Pancreas (tissue), 10 donors: ENCODE measurements at regions of chr4 and their contacts with region 1.

Region 1: DNA sequence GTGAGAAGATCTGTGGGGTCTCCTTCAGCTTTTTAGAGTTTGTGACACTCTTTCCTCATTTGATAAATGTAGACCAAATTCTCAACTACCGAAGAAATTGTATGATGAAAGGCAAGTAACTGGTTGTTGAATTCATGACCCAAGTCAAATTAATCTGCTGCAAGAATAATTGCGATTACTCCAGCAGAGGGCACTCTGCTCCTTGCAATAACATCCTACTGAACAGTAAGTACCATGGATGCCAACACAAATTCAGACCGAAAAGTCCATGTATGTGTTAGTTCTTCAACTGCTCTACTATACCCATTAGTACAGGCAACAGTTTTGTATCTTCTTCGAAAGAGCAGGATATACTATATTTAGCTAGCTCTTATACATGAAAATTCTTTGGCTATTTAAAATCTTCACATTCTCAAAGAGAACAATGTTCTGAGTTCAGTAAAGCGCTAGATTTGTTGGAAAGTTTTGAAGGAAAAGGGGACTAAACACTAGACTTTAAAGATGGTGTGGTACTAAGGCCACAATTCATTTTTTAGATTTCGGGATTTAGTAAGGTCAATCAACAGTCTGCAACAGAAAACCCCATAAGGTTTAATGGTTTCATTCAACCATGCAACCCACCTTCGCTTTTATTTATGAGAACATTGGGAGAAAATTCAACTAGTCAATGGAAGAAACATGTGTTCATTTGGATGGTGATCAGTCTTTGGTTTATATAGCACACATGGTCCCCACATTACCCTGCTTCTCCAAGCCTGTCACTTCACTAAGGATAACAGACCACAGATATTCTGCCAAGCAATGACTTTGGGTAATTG is 105.4 kb upstream of the TBC1D9 start:
- DNase-seq: peak in 4 of 6 donors; percentile 19 to 72 (median 46)
- ATAC-seq: peak; percentile 81 to 95 (median 92)
- H3K4me3 ChIP-seq: no peak overlapping the region
- H3K27ac ChIP-seq: no peak overlapping the region
- H3K4me1 ChIP-seq: no peaks in the 10 kb centered on the region
- H3K27me3 ChIP-seq: no peaks in the 10 kb centered on the region
- CTCF ChIP-seq: peak; percentile 22 to 60 (median 56)

Region 2: GRCh38 chr4:140800666-140801065 is 60.9 kb before region 1 on chr4:
- intact Hi-C with region 1: no loop called
- DNase-seq: no peak
- ATAC-seq: peak in 2 of 4 donors; percentile 20 to 44
- H3K4me3 ChIP-seq: no peak overlapping the region
- H3K27ac ChIP-seq: no peak overlapping the region
- H3K4me1 ChIP-seq: no peaks in the 10 kb centered on the region
- H3K27me3 ChIP-seq: no peaks in the 10 kb centered on the region
- CTCF ChIP-seq: no peak

Region 3: DNA sequence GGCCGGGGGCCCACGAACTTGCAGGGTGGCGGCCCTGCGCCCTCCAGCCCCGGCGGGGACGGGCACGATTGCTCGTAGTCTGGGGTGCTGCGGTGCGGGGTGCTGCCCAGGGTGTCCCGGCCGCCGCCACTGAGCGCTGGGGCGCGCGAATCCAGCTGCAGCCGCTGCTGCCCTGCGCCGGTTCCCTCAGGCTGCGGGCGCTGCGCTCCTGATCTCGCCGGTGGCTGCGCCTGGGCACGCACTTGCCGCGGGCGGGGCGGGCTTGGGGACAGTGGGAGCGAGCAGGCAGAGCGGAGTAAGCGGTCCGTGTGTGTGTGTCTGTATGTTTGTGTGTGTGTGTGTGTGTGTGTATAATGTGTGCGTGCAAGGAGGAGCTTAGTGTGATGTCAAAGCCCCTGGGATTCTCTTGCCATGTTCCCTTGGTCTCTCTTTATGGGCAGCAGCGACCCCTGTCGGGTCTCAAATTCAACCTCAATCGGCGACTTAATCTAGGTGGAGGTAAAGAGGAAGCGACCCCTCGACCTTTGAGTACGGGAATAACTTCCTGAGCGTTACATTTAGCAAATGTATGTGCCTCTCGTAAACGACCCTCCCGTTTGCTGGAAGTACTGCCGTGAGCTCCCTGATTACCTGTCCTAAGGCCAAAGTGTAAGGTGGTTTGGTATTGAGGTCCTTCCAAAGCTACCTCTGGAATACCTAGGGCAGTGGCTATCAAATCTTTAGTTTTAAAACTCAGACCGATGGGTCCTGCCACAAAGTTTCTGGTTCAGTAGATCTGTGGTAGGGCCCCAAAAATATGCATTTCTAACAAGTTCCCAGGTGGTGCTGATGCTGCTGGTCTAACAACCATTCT is 271.8 kb after region 1 on chr4 and contains the start of gene RNF150:
- intact Hi-C with region 1: loop called in 2 of 3 experiments (anchors 5 kb)
- DNase-seq: peak; percentile 54 to 84 (median 72)
- ATAC-seq: peak; percentile 84 to 93 (median 90)
- H3K4me3 ChIP-seq: peak within 1 kb of the TSS; percentile 74 to 94 (median 77)
- H3K27ac ChIP-seq: peak within 1 kb of the TSS in 2 of 4 donors; percentile 17 to 37
- H3K4me1 ChIP-seq: no peaks in the 10 kb centered on the region
- H3K27me3 ChIP-seq: peaks cover 0 to 4% (median 0%) of the 10 kb centered on the region in 4 donors
- CTCF ChIP-seq: peak; percentile 15 to 52 (median 29)
- total RNA-seq, gene RNF150: 1.6 to 4.1 (median 2.5) TPM